Prostate gland (tissue), 2 donors: ENCODE measurements at regions of chr2 and their contacts with region 1.

Region 1: GRCh38 chr2:127675331-127676261 is at the start of gene LIMS2:
- DNase-seq: no peak
- H3K4me3 ChIP-seq: peak within 1 kb of the TSS; percentile 56
- H3K27ac ChIP-seq: peak within 1 kb of the TSS; percentile 75 to 76
- H3K4me1 ChIP-seq: no peaks in the 10 kb centered on the region
- H3K27me3 ChIP-seq: no peaks in the 10 kb centered on the region
- CTCF ChIP-seq: no peak
- POLR2A ChIP-seq: no peak
- total RNA-seq, gene LIMS2: 31.9 to 63.2 TPM

Region 2: DNA sequence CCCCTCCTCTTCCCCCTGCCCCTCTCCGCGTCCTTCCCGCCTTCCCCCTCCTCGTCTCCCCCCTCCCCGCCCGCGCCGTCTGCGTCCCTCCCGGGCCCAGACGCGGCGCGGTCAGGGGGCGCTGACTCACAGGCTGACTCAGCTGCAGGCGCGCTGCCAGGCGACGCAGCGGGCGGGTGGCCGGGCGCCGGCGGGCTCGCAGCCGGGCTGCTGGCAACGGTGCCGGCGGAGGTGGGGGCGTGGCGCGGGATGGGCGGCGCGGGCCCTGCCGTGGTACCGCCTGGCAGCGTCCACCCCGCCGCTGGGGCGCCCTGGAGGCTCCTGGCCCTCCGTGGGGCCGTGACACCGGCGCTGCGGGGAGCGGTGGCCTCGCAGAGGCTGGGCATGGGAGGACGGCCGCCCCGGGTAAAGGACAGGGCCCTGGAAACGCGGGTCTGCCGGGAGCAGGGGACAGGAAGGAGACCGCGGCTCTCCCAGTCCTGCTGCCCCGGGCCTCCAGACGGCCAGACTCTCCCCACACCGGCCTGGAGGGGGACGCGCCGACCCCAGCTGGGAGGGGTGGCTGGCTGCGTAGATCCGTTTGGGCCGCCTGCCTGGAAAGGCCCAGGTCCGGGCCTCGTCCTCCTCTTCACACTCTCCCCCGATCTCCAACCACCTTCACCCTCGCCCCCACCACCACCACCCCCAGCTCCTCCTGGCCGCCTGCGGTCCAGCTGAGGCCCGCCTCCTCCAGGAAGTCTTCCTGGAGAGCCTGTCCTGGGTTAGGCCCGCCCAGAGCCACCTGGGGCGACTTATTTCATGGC is 267.4 kb before region 1 on chr2:
- intact Hi-C with region 1: loop called (anchors 10 kb)
- DNase-seq: peak; percentile 85
- H3K4me3 ChIP-seq: peak overlapping the region; percentile 43 to 47
- H3K27ac ChIP-seq: peak overlapping the region; percentile 87 to 88
- H3K4me1 ChIP-seq: no peaks in the 10 kb centered on the region
- H3K27me3 ChIP-seq: no peaks in the 10 kb centered on the region
- CTCF ChIP-seq: peak in 2 of 4 experiments; percentile 9 to 39
- POLR2A ChIP-seq: peak; percentile 60

Region 3: DNA sequence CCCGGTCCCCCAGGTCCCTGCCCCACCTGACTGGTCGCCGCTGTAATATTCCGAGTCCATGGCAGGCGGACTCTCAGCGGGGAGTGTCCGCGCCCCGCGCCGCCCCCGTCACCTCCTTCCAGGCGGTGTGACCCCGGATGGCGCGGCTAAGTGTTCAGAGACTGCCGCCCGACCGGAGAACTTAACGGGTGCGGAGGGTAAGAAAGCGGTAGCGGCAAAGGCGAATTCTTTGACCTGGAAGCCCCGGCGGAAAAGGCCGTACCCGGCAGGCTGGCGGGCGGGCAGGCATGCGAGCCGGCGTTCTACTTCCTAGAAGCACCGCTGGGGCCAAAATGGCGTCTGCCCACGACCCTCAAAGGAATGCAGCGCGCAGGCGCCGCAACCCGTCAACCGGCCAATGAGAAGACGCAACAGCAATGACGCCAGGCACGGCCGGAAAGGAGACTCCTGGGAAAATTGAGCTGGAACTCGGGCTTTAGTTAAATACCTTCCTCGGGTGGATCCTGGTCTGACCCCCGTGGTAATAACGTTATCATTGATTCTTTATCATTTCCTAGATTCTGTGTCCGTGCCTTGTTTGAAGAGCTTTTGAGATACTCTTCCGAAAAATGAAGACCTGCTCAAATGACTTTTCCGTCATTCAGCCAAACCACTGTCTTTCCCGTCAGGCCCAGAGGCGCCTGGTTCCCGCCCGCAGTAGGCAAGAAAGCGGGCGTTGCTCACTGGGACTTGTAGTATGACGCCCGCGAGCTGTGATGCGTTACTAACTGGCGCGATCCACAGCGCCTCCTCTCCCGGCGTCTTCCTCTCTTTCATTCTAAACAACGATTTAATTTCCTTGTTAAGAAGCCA is 149.2 kb before region 1 on chr2 and contains the start of gene IWS1:
- intact Hi-C with region 1: loop called (anchors 10 kb)
- DNase-seq: peak; percentile 96
- H3K4me3 ChIP-seq: peak within 1 kb of the TSS; percentile 87 to 95
- H3K27ac ChIP-seq: peak within 1 kb of the TSS; percentile 91 to 92
- H3K4me1 ChIP-seq: no peaks in the 10 kb centered on the region
- H3K27me3 ChIP-seq: no peaks in the 10 kb centered on the region
- CTCF ChIP-seq: peak in 3 of 4 experiments; percentile 16 to 63 (median 58)
- POLR2A ChIP-seq: peak; percentile 72
- total RNA-seq, gene IWS1: 36.6 to 42.3 TPM

Region 4: DNA sequence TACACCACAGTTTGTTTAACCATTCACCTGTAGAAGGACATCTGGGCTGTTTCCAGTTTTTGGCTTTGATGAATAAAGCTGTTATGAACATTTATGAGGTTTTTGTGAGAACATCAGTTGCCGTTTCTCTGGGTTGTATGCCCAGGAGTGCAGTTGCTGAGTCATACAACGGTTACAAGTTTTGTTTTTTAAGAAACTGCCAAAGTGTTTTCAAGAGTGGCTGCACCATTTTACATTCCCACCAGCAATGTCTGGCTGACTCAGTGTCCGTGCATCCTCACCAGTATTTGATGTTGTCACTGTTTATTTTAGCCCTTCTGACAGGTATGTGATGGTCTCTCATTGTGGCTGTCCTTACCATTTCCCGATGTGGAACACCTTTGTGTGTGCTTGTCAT is 77.6 kb before region 1 on chr2:
- intact Hi-C with region 1: no loop called
- DNase-seq: no peak
- H3K4me3 ChIP-seq: no peak overlapping the region
- H3K27ac ChIP-seq: no peak overlapping the region
- H3K4me1 ChIP-seq: no peaks in the 10 kb centered on the region
- H3K27me3 ChIP-seq: no peaks in the 10 kb centered on the region
- CTCF ChIP-seq: no peak
- POLR2A ChIP-seq: no peak